Heart right ventricle (tissue), 16 donors: ENCODE measurements at regions of chr4 and their contacts with region 1.

Region 1: DNA sequence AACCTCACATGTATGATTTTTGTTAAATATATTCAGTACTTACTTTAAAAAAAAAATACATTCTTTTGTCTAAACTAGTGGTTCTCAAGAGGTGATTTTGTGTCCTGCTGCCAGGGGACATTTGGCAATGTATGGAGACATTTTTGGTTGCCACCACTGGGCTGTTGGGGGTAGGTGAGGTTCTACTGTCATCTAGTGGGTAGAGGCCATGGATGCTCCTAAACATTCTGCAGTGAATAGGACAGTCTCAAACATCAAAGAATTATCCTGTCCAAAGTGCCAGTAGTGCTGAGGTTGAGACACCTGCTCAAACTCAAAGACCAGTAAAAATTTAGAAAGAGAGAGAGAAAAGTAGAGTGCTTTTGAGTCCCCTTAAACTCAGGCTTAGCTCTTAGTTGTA is 32.9 kb upstream of the PGM2 start:
- DNase-seq: peak in 1 of 2 donors; percentile 15
- ATAC-seq: peak in 7 of 8 donors; percentile 65 to 88 (median 83)
- H3K4me3 ChIP-seq: no peak overlapping the region
- H3K27ac ChIP-seq: no peak overlapping the region
- H3K4me1 ChIP-seq: peaks cover 0 to 7% (median 0%) of the 10 kb centered on the region in 9 donors
- H3K27me3 ChIP-seq: peaks cover 0 to 3% (median 0%) of the 10 kb centered on the region in 7 donors
- CTCF ChIP-seq: peak; percentile 56 to 81 (median 69)

Region 2: DNA sequence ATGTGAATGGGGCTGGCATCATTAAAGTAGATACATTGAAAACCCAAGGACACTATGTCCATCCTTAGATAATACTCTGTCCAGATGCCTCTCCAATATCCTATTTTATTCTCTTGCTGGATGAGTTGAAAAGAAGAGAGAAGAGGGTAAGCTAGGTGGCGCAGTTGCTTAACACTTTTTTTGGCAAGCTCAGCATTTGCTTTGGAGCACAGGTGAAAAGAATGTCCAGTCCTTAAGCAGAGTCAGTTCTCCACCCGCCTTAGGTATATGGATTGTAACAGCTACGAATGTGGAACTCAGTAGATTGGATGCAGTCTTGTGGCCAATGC is 340.6 kb before region 1 on chr4:
- intact Hi-C with region 1: loop called in 6 of 10 experiments (anchors 5 to 10 kb)
- DNase-seq: peak in 1 of 2 donors; percentile 35
- ATAC-seq: peak; percentile 46 to 90 (median 68)
- H3K4me3 ChIP-seq: peak overlapping the region in 8 of 10 donors; percentile 46 to 64 (median 54)
- H3K27ac ChIP-seq: no peak overlapping the region
- H3K4me1 ChIP-seq: peaks cover 0 to 19% (median 10%) of the 10 kb centered on the region in 9 donors
- H3K27me3 ChIP-seq: peaks cover 0 to 95% (median 72%) of the 10 kb centered on the region in 7 donors
- CTCF ChIP-seq: peak in 7 of 9 donors; percentile 38 to 68 (median 57)

Region 3: GRCh38 chr4:37603070-37603468 is 190.5 kb before region 1 on chr4:
- intact Hi-C with region 1: loop called in 9 of 10 experiments (anchors 1 to 5 kb)
- DNase-seq: peak; percentile 82 to 87
- ATAC-seq: peak; percentile 93 to 96 (median 95)
- H3K4me3 ChIP-seq: no peak overlapping the region
- H3K27ac ChIP-seq: no peak overlapping the region
- H3K4me1 ChIP-seq: peaks cover 0 to 20% (median 0%) of the 10 kb centered on the region in 9 donors
- H3K27me3 ChIP-seq: no peaks in the 10 kb centered on the region
- CTCF ChIP-seq: peak; percentile 93 to 99 (median 95)

Region 4: GRCh38 chr4:37666625-37667071 is 126.9 kb before region 1 on chr4:
- intact Hi-C with region 1: no loop called
- DNase-seq: peak in 1 of 2 donors; percentile 64
- ATAC-seq: peak; percentile 22 to 89 (median 68)
- H3K4me3 ChIP-seq: no peak overlapping the region
- H3K27ac ChIP-seq: peak overlapping the region; percentile 44 to 92 (median 74)
- H3K4me1 ChIP-seq: peaks cover 24 to 80% (median 64%) of the 10 kb centered on the region in 9 donors
- H3K27me3 ChIP-seq: no peaks in the 10 kb centered on the region
- CTCF ChIP-seq: peak in 3 of 9 donors; percentile 16 to 27 (median 17)

Region 5: GRCh38 chr4:37693450-37694190 is 99.9 kb before region 1 on chr4:
- intact Hi-C with region 1: loop called in 3 of 10 experiments (anchors 5 to 10 kb)
- DNase-seq: no peak
- ATAC-seq: no peak
- H3K4me3 ChIP-seq: no peak overlapping the region
- H3K27ac ChIP-seq: no peak overlapping the region
- H3K4me1 ChIP-seq: no peaks in the 10 kb centered on the region
- H3K27me3 ChIP-seq: no peaks in the 10 kb centered on the region
- CTCF ChIP-seq: no peak